BJ (cell line): ENCODE measurements at regions of chr1 and their contacts with region 1.

Region 1: DNA sequence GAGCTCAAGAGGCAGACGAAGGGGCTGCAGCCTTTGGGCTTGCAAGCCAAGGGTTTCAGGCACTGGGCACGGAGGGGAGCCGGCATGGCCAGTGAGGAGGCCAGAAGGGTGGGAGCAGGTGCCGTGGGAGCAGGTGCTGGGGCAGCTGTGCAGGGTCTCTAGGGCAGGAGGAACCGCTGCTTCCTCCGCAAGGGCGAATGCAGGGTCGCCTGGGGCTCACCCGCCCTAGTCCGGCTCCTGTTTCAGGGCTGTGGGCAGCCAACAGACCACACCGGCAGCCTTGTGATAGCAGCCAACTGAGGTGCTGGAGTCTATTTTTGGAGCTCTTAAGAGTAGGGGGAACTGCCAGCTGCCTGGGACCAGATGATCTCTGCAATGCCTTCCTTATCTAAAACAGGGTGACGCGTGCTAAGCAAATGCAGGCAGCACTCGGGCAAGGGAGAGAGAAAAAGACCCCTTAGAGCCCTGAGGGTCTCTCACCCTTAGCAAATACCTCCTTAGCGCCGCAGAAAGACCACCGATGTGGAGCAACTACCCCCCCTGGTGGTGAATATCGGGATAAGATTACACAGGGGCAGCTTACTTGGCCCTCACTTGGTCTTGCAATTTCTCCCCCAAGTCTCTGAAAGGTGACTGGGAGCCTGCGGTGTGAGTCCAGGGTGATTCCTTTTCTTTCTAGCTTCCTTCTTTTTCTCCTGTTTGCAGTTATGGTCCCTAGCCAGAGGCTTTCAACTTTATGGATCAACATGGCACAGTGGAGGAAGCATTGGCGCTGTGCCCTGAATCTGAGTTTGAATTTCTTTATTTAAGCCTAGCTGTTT is 20.7 kb upstream of the MAPKAPK2 start:
- DNase-seq: no peak
- H3K4me3 ChIP-seq: no peak overlapping the region
- H3K27me3 ChIP-seq: peaks cover 15% of the 10 kb centered on the region
- CTCF ChIP-seq: peak; percentile 73

Region 2: GRCh38 chr1:206479183-206480125 is 184.6 kb before region 1 on chr1:
- CTCF ChIA-PET with region 1: interaction called, 12 read pairs
- POLR2A ChIA-PET with region 1: no interaction called
- DNase-seq: no peak
- H3K4me3 ChIP-seq: no peak overlapping the region
- H3K27me3 ChIP-seq: no peaks in the 10 kb centered on the region
- CTCF ChIP-seq: peak; percentile 81

Region 3: DNA sequence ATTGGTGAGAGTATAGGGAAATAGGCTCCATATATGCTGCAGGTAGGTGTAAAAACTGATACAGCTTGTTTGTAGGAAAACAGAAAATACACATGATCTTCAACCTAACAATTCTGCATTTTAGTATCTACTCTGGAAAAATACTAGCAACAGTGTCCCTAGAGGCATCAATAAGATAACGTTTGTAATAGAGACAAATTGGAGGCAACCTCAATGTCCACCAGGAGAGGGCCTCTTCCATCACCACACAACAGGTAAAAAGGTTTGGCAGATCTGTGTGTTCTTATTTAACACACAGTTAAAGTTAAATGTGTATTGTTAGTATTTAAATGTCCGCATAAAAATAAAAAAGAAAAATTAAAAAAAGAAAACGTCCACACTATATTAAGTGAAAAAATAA is 57.2 kb before region 1 on chr1:
- CTCF ChIA-PET with region 1: interaction called, 43 read pairs
- POLR2A ChIA-PET with region 1: no interaction called
- DNase-seq: no peak
- H3K4me3 ChIP-seq: no peak overlapping the region
- H3K27me3 ChIP-seq: no peaks in the 10 kb centered on the region
- CTCF ChIP-seq: peak; percentile 51

Region 4: DNA sequence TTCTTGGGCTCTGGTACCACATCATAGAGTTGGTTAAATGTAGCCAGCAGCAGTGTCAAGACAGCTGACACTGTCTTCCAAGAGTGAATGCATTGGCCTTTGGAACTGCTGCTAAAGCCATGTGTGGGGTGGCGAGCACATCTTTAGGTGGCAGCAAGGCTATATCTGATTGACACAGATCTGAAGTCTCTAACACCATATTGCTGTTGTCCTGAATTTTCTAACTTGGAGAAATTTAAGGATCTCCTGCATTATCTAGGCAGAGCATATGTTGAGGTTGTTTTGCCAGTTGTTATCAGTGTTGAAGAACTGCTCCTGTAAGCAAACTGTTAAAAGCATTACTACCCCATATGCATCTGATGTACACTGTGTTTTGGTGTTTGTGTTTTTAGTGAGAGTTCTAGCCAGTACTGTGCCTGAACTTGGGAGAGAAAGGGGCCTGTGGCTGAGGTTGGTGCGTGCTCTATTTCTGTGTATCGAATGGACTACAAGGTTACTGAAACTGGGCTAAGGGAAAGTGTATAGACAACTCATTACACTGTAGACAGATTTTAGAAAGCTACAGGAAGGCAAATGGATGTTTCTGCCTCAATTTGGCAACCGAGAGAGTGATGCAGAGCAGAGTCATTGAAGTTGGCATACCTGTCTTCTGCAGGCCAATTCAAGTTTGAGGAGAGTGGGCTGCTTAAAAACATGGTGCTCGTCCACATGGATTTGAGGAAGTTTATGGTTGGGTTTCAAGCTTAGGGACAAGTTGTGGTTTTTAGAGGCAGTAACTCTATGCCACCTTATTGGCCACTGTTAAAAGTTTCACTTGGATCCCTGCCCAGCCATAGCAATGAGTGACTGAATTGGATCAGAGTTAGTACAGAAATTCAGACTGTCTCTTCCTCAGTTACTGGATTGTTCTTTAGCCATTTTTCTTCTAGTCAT is 11.8 kb before region 1 on chr1:
- CTCF ChIA-PET with region 1: interaction called, 50 read pairs
- POLR2A ChIA-PET with region 1: no interaction called
- DNase-seq: no peak
- H3K4me3 ChIP-seq: no peak overlapping the region
- H3K27me3 ChIP-seq: no peaks in the 10 kb centered on the region
- CTCF ChIP-seq: no peak

Region 5: DNA sequence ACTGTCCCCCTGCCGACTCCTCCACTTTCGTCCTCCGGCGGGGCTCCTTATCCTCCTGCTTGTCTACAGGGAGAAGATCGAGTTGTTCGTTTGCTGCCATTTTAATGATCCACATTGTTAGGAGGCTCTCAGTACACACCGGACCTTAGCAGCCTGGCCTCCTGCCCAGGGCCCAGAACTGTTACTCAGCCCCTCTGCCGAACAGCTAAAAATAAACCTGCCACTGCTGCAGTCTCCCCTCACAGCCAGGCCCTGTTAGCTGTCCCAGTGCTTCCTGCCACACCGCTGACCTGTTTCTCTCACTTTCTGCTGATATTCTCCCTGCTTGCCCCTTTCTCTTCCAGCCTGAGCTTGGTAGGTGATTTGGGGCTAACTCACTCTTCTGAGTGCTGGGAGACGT is 29.0 kb after region 1 on chr1:
- CTCF ChIA-PET with region 1: interaction called, 10 read pairs
- POLR2A ChIA-PET with region 1: no interaction called
- DNase-seq: no peak
- H3K4me3 ChIP-seq: no peak overlapping the region
- H3K27me3 ChIP-seq: no peaks in the 10 kb centered on the region
- CTCF ChIP-seq: no peak

Region 6: DNA sequence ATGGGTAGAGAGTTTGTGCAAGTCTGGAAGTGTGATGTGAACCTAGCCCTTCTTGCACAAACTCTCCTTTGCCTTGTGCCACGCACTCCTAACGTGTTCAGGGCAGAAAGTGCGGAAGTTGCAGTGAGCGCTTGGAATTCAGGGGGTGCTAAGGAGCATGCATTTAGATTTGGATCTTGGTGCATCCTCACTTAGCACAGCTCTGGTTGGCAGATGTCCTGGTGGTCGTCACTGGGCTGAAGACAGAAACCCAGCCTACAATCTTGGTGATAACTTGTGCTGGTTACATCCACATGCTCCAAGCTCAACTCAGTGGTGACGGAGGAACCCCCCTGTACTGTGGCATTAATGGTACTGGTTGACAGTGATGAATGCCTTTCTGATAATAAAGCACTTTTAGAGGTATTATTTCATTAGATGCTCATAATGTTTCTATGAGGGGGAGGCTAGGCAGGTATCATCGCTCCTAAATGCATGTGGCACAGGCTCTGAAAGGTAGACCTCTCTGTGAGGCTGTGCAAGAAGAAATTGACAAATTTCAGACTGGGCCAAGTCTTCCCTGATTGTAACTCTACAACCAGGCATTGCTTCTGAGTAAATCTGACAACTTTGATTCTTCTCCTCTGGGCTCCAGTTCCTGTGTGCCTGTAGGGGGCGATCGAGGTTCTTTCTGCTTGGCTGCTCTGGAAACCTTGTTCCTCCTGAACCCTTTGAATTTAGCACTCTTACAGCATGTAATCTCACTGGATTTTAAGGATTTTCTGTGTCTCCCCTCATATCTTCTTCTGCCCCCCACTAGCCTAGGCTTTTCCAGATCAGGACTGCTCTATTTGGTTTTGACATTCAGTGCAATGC is 61.3 kb after region 1 on chr1:
- CTCF ChIA-PET with region 1: interaction called, 15 read pairs
- POLR2A ChIA-PET with region 1: no interaction called
- DNase-seq: no peak
- H3K4me3 ChIP-seq: no peak overlapping the region
- H3K27me3 ChIP-seq: no peaks in the 10 kb centered on the region
- CTCF ChIP-seq: peak; percentile 79